ENCODE measurements at regions of chr1 and their contacts with region 1.

Region 1: GRCh38 chr1:98502937-98503336 is 158.6 kb upstream of the SNX7 start:
- DNase-seq: no peak
- ATAC-seq: peak; percentile 75
- H3K4me3 Mint-ChIP-seq: no peak overlapping the region
- H3K27ac Mint-ChIP-seq: no peak overlapping the region
- H3K4me1 Mint-ChIP-seq: peaks cover 42% of the 10 kb centered on the region
- H3K27me3 Mint-ChIP-seq: peaks cover 11% of the 10 kb centered on the region
- CTCF ChIP-seq: no peak

Region 2: GRCh38 chr1:98384461-98385141 is 118.3 kb before region 1 on chr1:
- CTCF ChIA-PET with region 1: no interaction called
- POLR2A ChIA-PET with region 1: no interaction called
- DNase-seq: no peak
- ATAC-seq: no peak
- H3K4me3 Mint-ChIP-seq: no peak overlapping the region
- H3K27ac Mint-ChIP-seq: no peak overlapping the region
- H3K4me1 Mint-ChIP-seq: no peaks in the 10 kb centered on the region
- H3K27me3 Mint-ChIP-seq: no peaks in the 10 kb centered on the region; the same call in 1 of the 2 replicates
- CTCF ChIP-seq: no peak

Region 3: GRCh38 chr1:98480271-98480670 is 22.7 kb before region 1 on chr1:
- CTCF ChIA-PET with region 1: no interaction called
- POLR2A ChIA-PET with region 1: no interaction called
- DNase-seq: no peak
- ATAC-seq: no peak
- H3K4me3 Mint-ChIP-seq: no peak overlapping the region
- H3K27ac Mint-ChIP-seq: peak overlapping the region; percentile 39; the same call in 1 of the 2 replicates
- H3K4me1 Mint-ChIP-seq: peaks cover 4% of the 10 kb centered on the region; the same call in 1 of the 2 replicates
- H3K27me3 Mint-ChIP-seq: no peaks in the 10 kb centered on the region
- CTCF ChIP-seq: no peak

Region 4: GRCh38 chr1:98523256-98523655 is 20.3 kb after region 1 on chr1:
- CTCF ChIA-PET with region 1: no interaction called
- POLR2A ChIA-PET with region 1: interaction called, 18 read pairs
- DNase-seq: no peak
- ATAC-seq: no peak
- H3K4me3 Mint-ChIP-seq: no peak overlapping the region
- H3K27ac Mint-ChIP-seq: no peak overlapping the region
- H3K4me1 Mint-ChIP-seq: no peaks in the 10 kb centered on the region
- H3K27me3 Mint-ChIP-seq: no peaks in the 10 kb centered on the region
- CTCF ChIP-seq: no peak

Region 5: DNA sequence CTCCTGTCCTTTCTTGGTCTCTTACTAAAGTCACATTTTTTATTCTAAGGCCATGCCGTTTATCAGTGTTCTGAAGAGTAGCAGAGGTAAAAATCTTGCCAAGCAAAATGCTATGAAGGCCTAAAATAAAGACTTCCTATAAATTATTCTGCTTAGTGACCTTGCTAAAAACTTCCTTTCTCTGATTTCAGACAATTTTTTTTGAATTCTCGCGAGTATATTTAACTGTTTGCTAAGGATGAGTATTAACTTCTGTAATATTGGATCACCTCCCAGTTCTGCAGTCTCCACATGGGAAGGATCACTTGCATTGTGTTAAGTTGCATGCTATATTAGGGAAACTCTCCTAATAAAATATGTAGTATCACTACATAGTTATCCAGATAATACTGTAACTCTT is 35.2 kb after region 1 on chr1:
- CTCF ChIA-PET with region 1: no interaction called
- POLR2A ChIA-PET with region 1: no interaction called
- DNase-seq: no peak
- ATAC-seq: no peak
- H3K4me3 Mint-ChIP-seq: no peak overlapping the region
- H3K27ac Mint-ChIP-seq: no peak overlapping the region
- H3K4me1 Mint-ChIP-seq: peaks cover 6% of the 10 kb centered on the region; the same call in 1 of the 2 replicates
- H3K27me3 Mint-ChIP-seq: no peaks in the 10 kb centered on the region; the same call in 1 of the 2 replicates
- CTCF ChIP-seq: no peak